ENCODE measurements at regions of chr20 and their contacts with region 1.

Region 1: DNA sequence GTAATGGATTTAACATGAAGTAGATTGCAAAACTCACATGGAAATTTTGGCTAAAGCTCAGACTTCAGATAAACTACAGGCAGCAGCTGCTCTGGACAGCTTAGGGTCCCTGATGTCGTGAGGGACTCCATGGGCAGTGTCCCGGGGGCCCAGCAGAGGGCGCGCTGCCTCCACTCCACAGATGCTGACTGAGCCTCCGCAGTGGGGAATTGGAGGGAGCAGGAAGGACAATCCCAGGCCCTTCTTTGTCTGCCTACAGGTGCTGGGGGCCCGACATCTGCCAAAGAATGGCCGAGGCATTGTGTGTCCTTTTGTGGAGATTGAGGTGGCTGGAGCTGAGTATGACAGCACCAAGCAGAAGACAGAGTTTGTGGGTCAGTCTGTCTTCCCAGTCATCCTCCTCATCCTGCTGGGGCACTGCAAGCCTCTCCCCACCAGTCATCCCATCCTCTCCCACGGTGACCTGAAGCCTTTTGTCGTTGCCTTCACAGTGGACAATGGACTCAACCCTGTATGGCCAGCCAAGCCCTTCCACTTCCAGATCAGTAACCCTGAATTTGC is 35.9 kb downstream of the PLCG1 start:
- DNase-seq: peak; percentile 84 to 98
- H3K4me3 ChIP-seq: no peak overlapping the region
- CTCF ChIP-seq: peak in 1 of 3 donors; percentile 90
- POLR2A ChIP-seq: no peak

Region 2: GRCh38 chr20:40414843-40415615 is 758.2 kb before region 1 on chr20:
- intact Hi-C with region 1: loop called (anchors 5 kb)
- DNase-seq: no peak
- H3K4me3 ChIP-seq: no peak overlapping the region
- CTCF ChIP-seq: no peak
- POLR2A ChIP-seq: no peak

Region 3: GRCh38 chr20:40738976-40739375 is 434.3 kb before region 1 on chr20:
- intact Hi-C with region 1: no loop called
- DNase-seq: no peak
- H3K4me3 ChIP-seq: no peak overlapping the region
- CTCF ChIP-seq: no peak
- POLR2A ChIP-seq: no peak

Region 4: GRCh38 chr20:41249406-41250281 is 76.4 kb after region 1 on chr20:
- intact Hi-C with region 1: loop called (anchors 10 kb)
- DNase-seq: peak; percentile 71 to 92
- H3K4me3 ChIP-seq: no peak overlapping the region
- CTCF ChIP-seq: no peak
- POLR2A ChIP-seq: no peak

Region 5: DNA sequence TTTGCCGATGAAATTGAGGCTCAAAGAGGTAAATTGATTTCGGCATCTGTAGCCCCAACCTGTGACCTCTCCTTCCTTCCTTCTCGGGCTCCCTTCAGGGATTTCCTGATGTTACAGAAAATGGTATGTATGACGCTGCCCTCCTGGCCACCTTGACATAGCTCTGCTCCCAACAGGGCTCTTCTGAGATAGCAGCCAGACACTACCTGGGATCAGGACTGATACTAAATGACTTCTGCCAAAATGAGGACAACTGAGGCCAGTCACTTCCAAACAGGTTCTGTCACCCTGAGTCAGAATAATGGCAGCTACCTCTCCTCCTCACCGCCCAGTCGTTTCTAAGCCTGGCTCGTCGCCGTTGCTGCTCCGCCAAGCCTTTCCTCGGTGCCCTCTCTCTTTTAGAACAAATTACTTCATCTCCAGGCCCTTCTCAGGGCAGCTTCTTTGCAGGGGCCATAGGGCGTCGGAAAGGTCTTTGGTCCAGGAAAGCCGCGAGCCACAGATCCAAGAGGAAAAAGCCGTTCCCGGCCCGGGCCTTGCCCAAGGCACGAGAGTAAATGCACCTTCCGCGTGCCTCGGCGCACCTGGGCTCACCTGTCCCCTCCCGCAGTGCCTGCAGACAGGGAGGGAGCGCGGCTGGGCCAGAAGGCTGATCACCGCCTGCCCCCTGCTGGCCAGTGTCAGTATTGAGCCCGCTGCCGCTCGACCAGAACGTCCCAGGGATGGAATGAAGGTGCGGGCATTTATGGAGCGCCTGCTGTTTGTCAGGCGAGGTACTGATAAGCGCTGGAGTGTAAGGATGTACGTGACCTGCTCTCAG is 166.5 kb after region 1 on chr20:
- intact Hi-C with region 1: loop called (anchors 5 kb)
- DNase-seq: peak; percentile 87 to 98
- H3K4me3 ChIP-seq: no peak overlapping the region
- CTCF ChIP-seq: peak in 1 of 3 donors; percentile 99
- POLR2A ChIP-seq: no peak

Region 6: DNA sequence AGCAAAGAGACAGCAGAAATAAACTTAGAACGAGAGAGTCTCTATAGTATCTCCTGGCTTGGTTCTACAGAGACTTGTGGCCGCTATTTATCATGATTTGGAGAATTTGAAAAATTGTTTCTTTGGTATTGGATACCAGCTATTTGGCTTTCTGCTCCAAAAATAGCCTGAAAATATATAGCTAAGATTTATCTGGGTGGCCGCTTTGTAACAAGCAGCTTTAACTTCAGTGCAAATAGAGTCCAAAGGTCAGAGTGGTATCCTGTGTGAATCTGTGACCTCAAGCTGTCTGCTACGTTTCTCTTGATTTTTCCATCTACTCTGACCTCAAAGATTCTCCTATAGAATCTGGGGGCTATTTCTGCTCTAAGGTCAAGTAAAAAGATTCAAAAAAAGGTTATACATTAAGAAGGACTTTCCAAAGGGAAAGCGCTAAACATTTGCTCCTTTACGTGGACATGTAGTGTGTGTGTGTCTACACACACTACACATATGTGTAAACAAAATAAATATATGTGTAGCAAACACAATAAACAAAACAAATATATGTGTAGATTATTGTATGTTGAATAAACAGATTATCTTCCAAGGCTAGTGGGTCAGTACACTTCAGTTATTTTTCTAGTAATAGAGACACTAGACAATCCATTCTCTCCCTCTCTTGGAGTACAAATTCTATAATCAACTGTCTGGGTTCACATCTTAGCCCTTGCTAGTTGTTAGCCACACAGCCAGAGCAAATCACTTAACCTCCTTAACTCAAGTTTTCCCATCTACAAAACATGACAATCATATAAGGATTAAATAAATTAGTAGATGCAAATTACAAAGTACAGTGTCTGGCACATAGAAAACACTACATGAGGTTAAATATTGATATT is 404.1 kb after region 1 on chr20:
- intact Hi-C with region 1: no loop called
- DNase-seq: no peak
- H3K4me3 ChIP-seq: no peak overlapping the region
- CTCF ChIP-seq: no peak
- POLR2A ChIP-seq: no peak

Measured in lower leg skin (tissue), 4 donors.